ENCODE measurements at regions of chr1 and their contacts with region 1.

Region 1: GRCh38 chr1:212062832-212063438 is 27.4 kb downstream of the DTL start:
- DNase-seq: no peak
- H3K4me3 Mint-ChIP-seq: no peak overlapping the region
- H3K27ac Mint-ChIP-seq: no peak overlapping the region
- H3K4me1 Mint-ChIP-seq: no peaks in the 10 kb centered on the region
- H3K27me3 Mint-ChIP-seq: no peaks in the 10 kb centered on the region

Region 2: GRCh38 chr1:211965108-211965805 is 97.7 kb before region 1 on chr1:
- CTCF ChIA-PET with region 1: no interaction called
- DNase-seq: no peak
- H3K4me3 Mint-ChIP-seq: no peak overlapping the region
- H3K27ac Mint-ChIP-seq: no peak overlapping the region
- H3K4me1 Mint-ChIP-seq: no peaks in the 10 kb centered on the region
- H3K27me3 Mint-ChIP-seq: no peaks in the 10 kb centered on the region

Region 3: DNA sequence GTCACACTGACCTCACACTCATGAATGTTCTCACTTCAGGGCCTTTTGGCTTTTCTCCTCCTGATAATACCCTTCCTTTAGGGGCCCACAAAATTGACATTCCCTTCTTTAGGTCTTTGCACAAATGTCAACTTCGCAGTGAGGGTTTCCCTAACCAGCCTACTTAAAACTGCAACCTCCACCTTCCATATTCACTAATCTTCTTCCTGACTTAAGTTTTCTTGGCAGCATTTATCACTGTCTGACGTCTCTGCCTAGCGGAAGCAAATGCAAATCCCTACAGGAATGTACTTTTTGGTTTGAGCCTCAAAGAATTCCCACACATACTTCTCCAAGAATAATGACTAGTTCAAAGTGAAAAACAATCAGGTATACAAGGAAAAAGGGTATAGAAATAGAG is 60.4 kb before region 1 on chr1:
- CTCF ChIA-PET with region 1: no interaction called
- DNase-seq: no peak
- H3K4me3 Mint-ChIP-seq: no peak overlapping the region
- H3K27ac Mint-ChIP-seq: no peak overlapping the region
- H3K4me1 Mint-ChIP-seq: no peaks in the 10 kb centered on the region
- H3K27me3 Mint-ChIP-seq: no peaks in the 10 kb centered on the region

Region 4: DNA sequence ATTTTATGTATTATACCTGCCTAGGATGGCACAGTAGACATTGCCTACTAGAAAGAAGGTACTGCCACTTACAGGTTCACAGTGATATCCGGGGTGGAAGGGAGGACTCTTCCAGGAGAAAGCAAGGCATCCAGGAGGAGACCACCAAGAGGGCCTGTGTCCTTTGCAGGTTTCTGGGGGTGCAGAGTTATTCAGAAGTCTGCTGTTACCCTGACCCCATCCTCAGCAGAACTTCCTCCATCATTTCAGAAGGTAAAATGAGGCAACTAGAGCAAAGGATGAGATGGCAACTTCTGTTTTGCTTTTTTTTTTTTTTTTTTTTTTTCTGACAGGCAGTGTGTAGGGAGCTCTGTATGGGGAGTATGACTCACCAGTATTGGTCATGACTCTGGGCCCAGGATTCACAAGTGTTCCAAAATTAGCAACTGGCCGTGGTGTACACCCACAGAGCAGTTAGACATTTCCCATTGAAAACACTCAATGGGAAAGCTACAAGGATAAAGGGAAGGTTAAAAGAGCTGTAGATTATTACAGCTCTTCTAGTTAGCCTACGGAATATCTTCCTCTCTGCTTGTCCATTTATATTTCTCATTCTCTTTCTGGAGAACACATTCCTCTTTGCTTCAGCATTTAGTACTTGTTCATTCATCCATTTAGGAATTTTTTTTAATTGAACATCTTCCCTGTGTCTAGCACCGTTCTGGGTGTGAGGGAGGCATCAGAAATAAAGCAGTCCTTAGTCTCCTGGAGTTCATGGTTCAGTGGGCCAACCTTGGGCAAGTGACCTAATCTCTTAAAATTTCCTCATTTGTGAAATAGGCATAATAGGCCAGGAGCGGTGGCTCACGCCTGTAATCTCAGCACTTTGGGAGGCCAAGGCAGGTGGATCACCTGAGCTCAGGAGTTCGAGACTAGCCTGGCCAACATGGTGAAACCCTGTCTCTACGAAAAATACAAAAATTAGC is 171.8 kb after region 1 on chr1:
- CTCF ChIA-PET with region 1: no interaction called
- DNase-seq: no peak
- H3K4me3 Mint-ChIP-seq: no peak overlapping the region
- H3K27ac Mint-ChIP-seq: no peak overlapping the region
- H3K4me1 Mint-ChIP-seq: peaks cover 47% of the 10 kb centered on the region
- H3K27me3 Mint-ChIP-seq: peaks cover 40% of the 10 kb centered on the region

Region 5: GRCh38 chr1:212368073-212368484 is 305.1 kb after region 1 on chr1:
- CTCF ChIA-PET with region 1: interaction called, 33 read pairs
- DNase-seq: peak; percentile 71
- H3K4me3 Mint-ChIP-seq: no peak overlapping the region
- H3K27ac Mint-ChIP-seq: no peak overlapping the region
- H3K4me1 Mint-ChIP-seq: no peaks in the 10 kb centered on the region
- H3K27me3 Mint-ChIP-seq: no peaks in the 10 kb centered on the region

Measured in activated naive CD4-positive, alpha-beta T cell treated with anti-CD3 and anti-CD28 coated beads, Interleukin-2, amount 10 ng/mL, durations not matched to agents 7 days and 5 days (primary cell).